ENCODE measurements at regions of chr14 and their contacts with region 1.

Region 1: GRCh38 chr14:93332853-93333630 is at the start of gene BTBD7:
- DNase-seq: peak; percentile 88 to 99 (median 92)
- ATAC-seq: peak; percentile 94
- H3K4me3 ChIP-seq: peak within 1 kb of the TSS; percentile 80
- H3K4me3 Mint-ChIP-seq: peak within 1 kb of the TSS; percentile 97
- H3K27ac ChIP-seq: peak within 1 kb of the TSS; percentile 52 to 73
- H3K27ac Mint-ChIP-seq: peak within 1 kb of the TSS; percentile 92
- H3K4me1 ChIP-seq: peaks cover 20% of the 10 kb centered on the region
- H3K4me1 Mint-ChIP-seq: peaks cover 58% of the 10 kb centered on the region
- H3K27me3 ChIP-seq: no peaks in the 10 kb centered on the region
- H3K27me3 Mint-ChIP-seq: no peaks in the 10 kb centered on the region
- CTCF ChIP-seq: no peak
- total RNA-seq, gene BTBD7: 12.5 to 12.6 TPM

Region 2: GRCh38 chr14:93206793-93207467 is 126.1 kb before region 1 on chr14 and contains the starts of genes GON7 and UBR7:
- CTCF ChIA-PET with region 1: no interaction called
- POLR2A ChIA-PET with region 1: interaction called, 4 read pairs
- intact Hi-C with region 1: loop called (anchors 1 to 5 kb)
- DNase-seq: peak; percentile 68 to 95 (median 82)
- ATAC-seq: peak; percentile 97
- H3K4me3 ChIP-seq: peak within 1 kb of the TSS; percentile 93
- H3K4me3 Mint-ChIP-seq: peak within 1 kb of the TSS; percentile 97
- H3K27ac ChIP-seq: peak within 1 kb of the TSS; percentile 56 to 75
- H3K27ac Mint-ChIP-seq: peak within 1 kb of the TSS; percentile 95
- H3K4me1 ChIP-seq: peaks cover 32% of the 10 kb centered on the region
- H3K4me1 Mint-ChIP-seq: peaks cover 52% of the 10 kb centered on the region
- H3K27me3 ChIP-seq: no peaks in the 10 kb centered on the region
- H3K27me3 Mint-ChIP-seq: no peaks in the 10 kb centered on the region
- CTCF ChIP-seq: peak; percentile 21
- total RNA-seq, gene GON7: 2.3 to 2.4 TPM
- total RNA-seq, gene UBR7: 6.8 to 7.4 TPM

Region 3: DNA sequence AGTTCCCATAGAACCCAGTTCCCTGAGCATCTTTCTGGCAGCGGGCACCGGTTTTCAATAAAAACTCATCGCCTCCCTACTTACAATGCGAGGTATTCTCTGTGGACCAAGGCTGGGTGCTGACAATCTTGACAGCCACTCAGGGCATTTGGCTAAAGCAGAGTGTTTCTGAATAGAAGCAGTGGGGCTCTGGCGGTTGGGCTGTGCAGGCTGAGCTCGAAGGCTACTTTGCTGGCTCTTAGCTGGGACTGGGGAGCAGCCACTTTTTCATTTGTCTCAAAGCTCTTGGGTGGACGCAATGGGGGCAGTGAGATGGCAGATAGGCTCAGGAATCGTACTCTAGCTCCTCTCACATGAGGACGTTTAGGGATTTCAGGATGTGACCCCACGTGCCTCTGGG is 249.5 kb after region 1 on chr14:
- CTCF ChIA-PET with region 1: no interaction called
- POLR2A ChIA-PET with region 1: no interaction called
- intact Hi-C with region 1: no loop called
- DNase-seq: no peak
- ATAC-seq: no peak
- H3K4me3 ChIP-seq: no peak overlapping the region
- H3K4me3 Mint-ChIP-seq: no peak overlapping the region
- H3K27ac ChIP-seq: no peak overlapping the region
- H3K27ac Mint-ChIP-seq: no peak overlapping the region
- H3K4me1 ChIP-seq: no peaks in the 10 kb centered on the region
- H3K4me1 Mint-ChIP-seq: no peaks in the 10 kb centered on the region
- H3K27me3 ChIP-seq: peaks cover 0 to 4% of the 10 kb centered on the region in 2 experiments
- H3K27me3 Mint-ChIP-seq: peaks cover 29% of the 10 kb centered on the region
- CTCF ChIP-seq: no peak

Measured in CD4-positive, alpha-beta T cell (primary cell).